Natural killer cell (primary cell): ENCODE measurements at regions of chr1 and their contacts with region 1.

Region 1: DNA sequence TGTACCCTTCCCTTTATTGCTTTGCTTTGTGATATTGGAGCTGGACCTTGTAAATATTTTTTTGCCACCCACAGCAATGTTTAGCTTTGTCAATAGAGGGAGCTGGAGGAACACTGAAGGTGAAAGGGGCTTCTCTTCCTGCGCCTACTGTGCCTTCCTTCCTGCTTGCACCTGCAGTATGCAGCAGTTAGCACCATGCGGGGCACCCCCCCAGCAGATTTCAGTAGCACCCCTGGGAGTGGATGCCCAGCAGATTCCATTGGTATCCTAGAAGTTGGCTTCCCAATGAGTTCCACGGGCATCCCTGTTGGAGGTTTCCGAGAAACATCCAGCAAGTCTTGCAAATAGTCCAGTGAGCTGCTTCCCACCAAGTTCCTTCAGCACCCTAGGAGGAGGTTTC is 25.6 kb downstream of the S100A10 start:
- DNase-seq: peak in 1 of 2 donors; percentile 84
- ATAC-seq: peak; percentile 72 to 90 (median 89)
- H3K4me3 ChIP-seq: no peak overlapping the region
- H3K4me3 Mint-ChIP-seq: no peak overlapping the region
- H3K27ac ChIP-seq: no peak overlapping the region
- H3K27ac Mint-ChIP-seq: no peak overlapping the region
- H3K4me1 ChIP-seq: peaks cover 7% of the 10 kb centered on the region
- H3K4me1 Mint-ChIP-seq: peaks cover 0 to 6% of the 10 kb centered on the region in 2 donors
- H3K27me3 ChIP-seq: no peaks in the 10 kb centered on the region
- H3K27me3 Mint-ChIP-seq: peaks cover 5 to 13% of the 10 kb centered on the region in 2 donors
- CTCF ChIP-seq: peak; percentile 82

Region 2: DNA sequence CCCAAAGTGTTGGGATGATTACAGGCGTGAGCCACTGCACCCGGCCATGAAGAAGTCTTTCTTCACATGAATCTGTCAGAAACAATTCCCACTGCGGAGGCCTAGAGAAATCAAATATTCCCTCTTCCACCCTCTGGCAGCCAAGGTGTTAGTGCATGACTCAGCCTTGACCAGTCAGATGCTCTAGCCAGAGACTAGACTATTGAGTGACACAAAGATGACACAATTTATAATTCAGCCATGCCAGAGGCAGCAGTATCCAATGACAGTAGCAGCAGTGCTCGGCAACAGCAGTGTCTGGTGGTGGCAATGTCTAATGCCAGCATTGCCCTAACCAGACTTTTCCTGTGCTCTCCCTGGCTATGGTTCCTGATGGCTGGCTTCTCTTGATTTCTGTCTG is 1072.5 kb before region 1 on chr1:
- intact Hi-C with region 1: no loop called
- DNase-seq: no peak
- ATAC-seq: no peak
- H3K4me3 ChIP-seq: no peak overlapping the region
- H3K4me3 Mint-ChIP-seq: no peak overlapping the region
- H3K27ac ChIP-seq: no peak overlapping the region
- H3K27ac Mint-ChIP-seq: no peak overlapping the region
- H3K4me1 ChIP-seq: peaks cover 2% of the 10 kb centered on the region
- H3K4me1 Mint-ChIP-seq: peaks cover 5 to 11% of the 10 kb centered on the region in 2 donors
- H3K27me3 ChIP-seq: no peaks in the 10 kb centered on the region
- H3K27me3 Mint-ChIP-seq: peaks cover 0 to 7% of the 10 kb centered on the region in 2 donors
- CTCF ChIP-seq: no peak

Region 3: DNA sequence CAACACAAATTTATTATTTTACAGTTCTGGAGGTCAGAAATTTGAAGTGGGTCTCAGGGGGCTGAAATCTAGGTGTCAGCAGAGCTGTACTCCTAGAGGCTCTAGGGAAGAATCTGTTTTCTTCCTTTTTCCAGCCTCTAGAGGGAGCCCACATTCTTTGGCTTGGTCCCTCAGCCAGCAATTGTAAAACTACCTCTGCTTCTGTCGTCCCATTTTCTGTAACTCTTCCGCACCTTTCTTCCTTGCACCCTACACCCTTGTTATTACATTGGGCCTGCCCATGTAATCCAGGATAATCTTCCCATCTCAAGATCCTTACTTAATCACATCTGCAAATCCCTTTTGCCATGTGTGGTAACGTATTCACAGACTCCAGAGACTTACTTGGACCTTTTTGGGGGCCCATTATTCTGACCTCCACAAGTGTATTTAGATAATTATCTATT is 34.0 kb before region 1 on chr1:
- intact Hi-C with region 1: loop called (anchors 2 kb)
- DNase-seq: peak in 1 of 2 donors; percentile 84
- ATAC-seq: peak; percentile 84 to 98 (median 91)
- H3K4me3 ChIP-seq: no peak overlapping the region
- H3K4me3 Mint-ChIP-seq: no peak overlapping the region
- H3K27ac ChIP-seq: no peak overlapping the region
- H3K27ac Mint-ChIP-seq: peak overlapping the region in 1 of 2 donors; percentile 42
- H3K4me1 ChIP-seq: no peaks in the 10 kb centered on the region
- H3K4me1 Mint-ChIP-seq: peaks cover 0 to 5% of the 10 kb centered on the region in 2 donors
- H3K27me3 ChIP-seq: no peaks in the 10 kb centered on the region
- H3K27me3 Mint-ChIP-seq: peaks cover 8 to 9% of the 10 kb centered on the region in 2 donors
- CTCF ChIP-seq: peak; percentile 92

Region 4: DNA sequence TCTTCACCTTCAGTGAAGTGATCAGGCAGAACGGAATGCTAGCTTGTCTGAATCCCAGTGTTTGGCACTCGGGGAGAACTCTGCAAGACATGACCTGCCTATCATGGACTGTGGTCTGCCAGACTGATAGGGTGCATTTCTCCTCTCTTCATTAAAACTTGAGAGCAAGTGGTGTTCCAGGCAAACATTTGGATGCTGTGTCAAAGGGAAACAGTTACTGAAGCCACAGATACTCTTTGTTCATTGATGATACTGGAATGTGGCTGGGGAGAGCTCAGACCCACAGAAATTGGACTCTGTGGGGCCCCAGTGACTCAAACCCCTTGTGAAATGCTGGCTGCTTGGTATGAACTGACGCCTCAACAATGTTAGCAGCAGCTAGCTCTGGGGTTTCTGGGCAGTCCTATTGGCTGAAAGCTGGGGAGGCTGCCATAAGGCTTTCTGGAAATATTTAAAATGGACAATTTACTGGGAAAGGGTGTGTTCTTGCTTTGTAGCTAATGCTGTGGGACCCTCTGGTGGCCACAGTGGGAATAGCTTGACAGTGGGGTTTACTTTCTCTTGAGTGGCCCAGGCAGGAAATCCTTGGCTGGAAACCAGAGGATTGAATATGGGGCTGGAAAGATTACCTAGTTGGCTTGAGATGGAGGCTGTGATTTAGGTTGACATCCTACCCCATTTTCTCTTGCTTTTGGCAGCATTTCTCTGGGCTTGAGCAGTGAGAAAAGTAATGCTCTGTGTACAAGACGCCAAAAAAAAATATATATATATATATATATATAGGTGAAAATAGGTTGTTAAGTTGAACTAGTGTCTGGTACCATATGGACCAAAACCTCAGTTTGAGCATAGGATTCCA is 33.6 kb after region 1 on chr1:
- intact Hi-C with region 1: loop called (anchors 1 kb)
- DNase-seq: peak; percentile 67 to 88
- ATAC-seq: peak; percentile 72 to 85 (median 83)
- H3K4me3 ChIP-seq: no peak overlapping the region
- H3K4me3 Mint-ChIP-seq: no peak overlapping the region
- H3K27ac ChIP-seq: no peak overlapping the region
- H3K27ac Mint-ChIP-seq: no peak overlapping the region
- H3K4me1 ChIP-seq: peaks cover 7% of the 10 kb centered on the region
- H3K4me1 Mint-ChIP-seq: no peaks in the 10 kb centered on the region
- H3K27me3 ChIP-seq: peaks cover 2% of the 10 kb centered on the region
- H3K27me3 Mint-ChIP-seq: peaks cover 12 to 15% of the 10 kb centered on the region in 2 donors
- CTCF ChIP-seq: peak; percentile 96

Region 5: GRCh38 chr1:152189657-152190442 is 221.8 kb after region 1 on chr1:
- intact Hi-C with region 1: no loop called
- DNase-seq: peak; percentile 45 to 83
- ATAC-seq: peak; percentile 64 to 73 (median 68)
- H3K4me3 ChIP-seq: peak overlapping the region; percentile 72
- H3K4me3 Mint-ChIP-seq: peak overlapping the region; percentile 84
- H3K27ac ChIP-seq: no peak overlapping the region
- H3K27ac Mint-ChIP-seq: peak overlapping the region in 1 of 2 donors; percentile 81
- H3K4me1 ChIP-seq: peaks cover 15% of the 10 kb centered on the region
- H3K4me1 Mint-ChIP-seq: peaks cover 6 to 14% of the 10 kb centered on the region in 2 donors
- H3K27me3 ChIP-seq: no peaks in the 10 kb centered on the region
- H3K27me3 Mint-ChIP-seq: peaks cover 0 to 9% of the 10 kb centered on the region in 2 donors
- CTCF ChIP-seq: peak; percentile 81